ENCODE measurements at regions of chr7 and their contacts with region 1.

Region 1: DNA sequence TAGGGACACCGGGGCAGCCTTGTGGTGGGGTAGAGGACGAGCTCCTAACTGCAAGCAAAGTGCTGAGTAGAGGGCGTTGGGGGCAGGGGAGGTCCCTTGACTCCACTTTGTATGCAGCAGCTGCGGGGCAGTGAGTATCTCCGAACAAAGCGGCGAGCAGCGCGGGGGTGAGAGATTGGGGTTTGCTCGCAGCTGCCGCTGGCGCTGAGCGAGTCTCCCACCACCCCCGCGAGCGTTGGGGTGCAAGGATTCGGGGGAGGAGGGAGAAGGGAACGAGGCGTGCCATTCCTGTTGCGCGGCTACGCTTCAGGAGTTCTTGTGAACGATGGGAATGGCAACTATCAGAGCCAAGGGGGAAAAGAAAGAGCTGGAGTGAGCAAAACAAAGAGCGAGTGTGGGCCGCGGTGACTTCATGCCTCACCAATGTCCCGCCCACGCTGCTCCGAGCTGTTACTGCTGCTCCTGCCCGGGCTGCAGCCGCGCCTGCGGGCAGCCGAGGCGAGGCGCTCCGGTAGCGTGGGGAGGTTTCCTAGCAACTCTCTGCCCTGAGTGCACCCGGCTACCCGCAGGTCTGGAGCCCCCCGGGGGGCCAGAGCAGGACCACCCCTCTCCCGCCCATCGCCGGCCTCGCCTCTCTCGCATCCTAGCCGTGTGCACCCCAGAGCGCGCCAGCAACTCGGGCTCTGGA is at the start of gene ITGB8:
- DNase-seq: peak; percentile 79
- ATAC-seq: peak; percentile 67
- H3K4me3 ChIP-seq: peak within 1 kb of the TSS; percentile 89
- H3K27ac ChIP-seq: peak within 1 kb of the TSS; percentile 85
- H3K4me1 ChIP-seq: peaks cover 26% of the 10 kb centered on the region
- H3K27me3 ChIP-seq: no peaks in the 10 kb centered on the region
- CTCF ChIP-seq: no peak
- total RNA-seq, gene ITGB8: 13.9 and 14.0 TPM in 2 replicates

Region 2: GRCh38 chr7:20299647-20300312 is 30.6 kb before region 1 on chr7:
- CTCF ChIA-PET with region 1: no interaction called
- POLR2A ChIA-PET with region 1: no interaction called
- intact Hi-C with region 1: loop called (anchors 1 kb)
- DNase-seq: no peak
- ATAC-seq: no peak
- H3K4me3 ChIP-seq: no peak overlapping the region
- H3K27ac ChIP-seq: no peak overlapping the region
- H3K4me1 ChIP-seq: peaks cover 34% of the 10 kb centered on the region
- H3K27me3 ChIP-seq: no peaks in the 10 kb centered on the region
- CTCF ChIP-seq: no peak

Region 3: DNA sequence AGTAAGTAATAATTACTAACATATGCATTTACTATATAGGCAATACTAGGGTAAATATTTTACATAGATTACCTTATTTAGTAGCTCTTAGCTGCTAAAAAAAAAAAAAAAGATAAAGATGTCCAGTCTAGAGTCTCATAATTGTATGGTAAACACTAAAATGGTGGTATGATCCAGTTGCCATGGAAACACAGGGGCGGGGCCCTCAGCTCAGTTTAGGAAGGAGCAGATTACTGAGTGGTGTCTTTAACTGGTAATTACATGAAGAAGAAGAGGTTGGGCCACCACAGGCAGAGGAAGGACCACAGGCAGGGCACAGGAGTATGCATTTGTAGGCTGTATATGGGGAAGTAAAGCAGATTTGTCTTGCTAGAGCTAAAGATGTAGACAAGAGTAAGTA is 44.0 kb after region 1 on chr7:
- CTCF ChIA-PET with region 1: no interaction called
- POLR2A ChIA-PET with region 1: no interaction called
- intact Hi-C with region 1: no loop called
- DNase-seq: no peak
- ATAC-seq: no peak
- H3K4me3 ChIP-seq: no peak overlapping the region
- H3K27ac ChIP-seq: no peak overlapping the region
- H3K4me1 ChIP-seq: no peaks in the 10 kb centered on the region; the same call in 1 of the 2 replicates
- H3K27me3 ChIP-seq: no peaks in the 10 kb centered on the region
- CTCF ChIP-seq: no peak

Region 4: GRCh38 chr7:20393021-20393610 is 62.7 kb after region 1 on chr7:
- CTCF ChIA-PET with region 1: no interaction called
- POLR2A ChIA-PET with region 1: interaction called, 12 read pairs
- intact Hi-C with region 1: loop called (anchors 1 kb)
- DNase-seq: peak; percentile 74
- ATAC-seq: peak; percentile 81
- H3K4me3 ChIP-seq: peak overlapping the region; percentile 40
- H3K27ac ChIP-seq: peak overlapping the region; percentile 97
- H3K4me1 ChIP-seq: peaks cover 49% of the 10 kb centered on the region
- H3K27me3 ChIP-seq: no peaks in the 10 kb centered on the region
- CTCF ChIP-seq: no peak

Region 5: DNA sequence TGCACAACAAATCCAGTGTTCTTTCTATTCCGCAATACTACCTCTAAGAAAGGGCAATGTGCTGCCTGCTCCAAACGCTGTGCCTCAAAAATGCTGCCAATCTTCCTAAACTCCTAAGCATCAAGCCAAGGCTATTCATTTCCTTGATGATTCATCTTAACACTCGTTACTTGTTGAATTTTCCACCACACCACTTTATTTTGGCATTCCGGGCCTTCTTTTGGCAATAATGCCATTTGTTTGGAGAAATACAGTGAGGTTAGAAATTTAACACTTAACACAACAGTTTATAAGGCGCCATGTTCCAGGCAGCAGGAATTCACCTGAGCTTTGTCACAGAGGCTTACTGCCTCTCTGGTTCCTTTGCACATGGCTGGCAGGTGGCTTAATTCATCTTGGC is 202.5 kb after region 1 on chr7:
- CTCF ChIA-PET with region 1: no interaction called
- POLR2A ChIA-PET with region 1: no interaction called
- intact Hi-C with region 1: loop called (anchors 5 kb)
- DNase-seq: peak; percentile 57
- ATAC-seq: peak; percentile 97
- H3K4me3 ChIP-seq: no peak overlapping the region
- H3K27ac ChIP-seq: no peak overlapping the region
- H3K4me1 ChIP-seq: peaks cover 9% of the 10 kb centered on the region
- H3K27me3 ChIP-seq: no peaks in the 10 kb centered on the region
- CTCF ChIP-seq: no peak